ENCODE measurements at regions of chr14 and their contacts with region 1.

Region 1: GRCh38 chr14:50860478-50861086 is 11.3 kb upstream of the ABHD12B start:
- DNase-seq: peak; percentile 94
- ATAC-seq: peak; percentile 47
- H3K4me3 Mint-ChIP-seq: peak overlapping the region; percentile 54; the same call in 1 of the 2 replicates
- H3K27ac Mint-ChIP-seq: peak overlapping the region; percentile 78; the same call in 1 of the 2 replicates
- H3K4me1 Mint-ChIP-seq: peaks cover 52% of the 10 kb centered on the region
- H3K27me3 Mint-ChIP-seq: no peaks in the 10 kb centered on the region; the same call in none of the 2 replicates
- CTCF ChIP-seq: peak; percentile 54

Region 2: GRCh38 chr14:50599700-50600444 is 260.7 kb before region 1 on chr14:
- CTCF ChIA-PET with region 1: interaction called, 21 read pairs
- POLR2A ChIA-PET with region 1: no interaction called
- DNase-seq: no peak
- ATAC-seq: peak; percentile 78
- H3K4me3 Mint-ChIP-seq: no peak overlapping the region
- H3K27ac Mint-ChIP-seq: 0 out of 2 replicates have a peak overlapping the region, but pooled peaks have one; percentile 39
- H3K4me1 Mint-ChIP-seq: peaks cover 19% of the 10 kb centered on the region
- H3K27me3 Mint-ChIP-seq: no peaks in the 10 kb centered on the region
- CTCF ChIP-seq: no peak

Region 3: GRCh38 chr14:50726372-50727107 is 134.0 kb before region 1 on chr14:
- CTCF ChIA-PET with region 1: no interaction called
- POLR2A ChIA-PET with region 1: no interaction called
- DNase-seq: no peak
- ATAC-seq: no peak
- H3K4me3 Mint-ChIP-seq: no peak overlapping the region
- H3K27ac Mint-ChIP-seq: no peak overlapping the region
- H3K4me1 Mint-ChIP-seq: no peaks in the 10 kb centered on the region
- H3K27me3 Mint-ChIP-seq: no peaks in the 10 kb centered on the region
- CTCF ChIP-seq: no peak

Region 4: DNA sequence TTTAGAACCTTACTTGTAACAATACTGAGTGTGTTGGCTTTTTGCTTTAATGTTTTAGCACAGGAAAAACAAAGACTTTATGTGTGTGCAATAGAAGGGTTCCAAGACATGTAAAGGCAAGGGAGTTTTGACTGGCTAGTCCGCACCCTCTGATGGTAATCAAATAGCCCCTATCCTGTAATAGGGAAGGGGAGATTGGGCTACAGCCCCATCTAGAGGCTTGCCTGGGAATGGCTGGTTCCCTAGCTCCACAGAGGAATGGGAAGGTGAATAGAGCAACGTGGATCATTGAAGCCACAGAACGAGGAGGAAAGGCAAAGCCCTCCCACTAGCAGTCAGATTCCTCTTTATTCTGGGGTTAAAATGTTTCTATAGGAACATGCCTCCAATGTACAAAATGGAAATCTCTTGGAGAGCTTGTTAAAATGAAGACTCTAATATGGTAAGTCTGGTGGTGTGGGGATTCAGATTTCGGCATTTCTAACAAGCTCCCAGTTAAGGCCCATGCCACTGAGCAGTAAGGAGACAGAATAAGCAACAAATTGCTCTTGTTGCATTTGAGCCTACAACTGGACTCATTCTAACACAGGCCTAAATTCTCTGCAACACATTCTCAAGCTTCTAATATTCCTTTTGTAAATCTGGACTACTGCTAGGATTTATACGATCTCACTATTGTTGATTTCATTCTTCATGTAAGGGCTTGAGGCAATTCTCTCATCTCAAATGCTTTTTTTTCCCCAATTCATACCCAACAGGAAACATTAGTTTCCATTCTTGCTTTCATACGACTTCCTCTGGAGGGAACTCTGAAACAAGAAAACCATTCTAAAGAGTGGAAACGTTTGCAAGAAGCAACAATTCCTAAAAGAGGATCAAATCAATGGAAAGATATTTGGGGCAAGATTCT is 86.7 kb before region 1 on chr14:
- CTCF ChIA-PET with region 1: interaction called, 56 read pairs
- POLR2A ChIA-PET with region 1: no interaction called
- DNase-seq: peak; percentile 83
- ATAC-seq: peak; percentile 98
- H3K4me3 Mint-ChIP-seq: no peak overlapping the region
- H3K27ac Mint-ChIP-seq: peak overlapping the region; percentile 43
- H3K4me1 Mint-ChIP-seq: peaks cover 12% of the 10 kb centered on the region
- H3K27me3 Mint-ChIP-seq: no peaks in the 10 kb centered on the region
- CTCF ChIP-seq: peak; percentile 72

Region 5: DNA sequence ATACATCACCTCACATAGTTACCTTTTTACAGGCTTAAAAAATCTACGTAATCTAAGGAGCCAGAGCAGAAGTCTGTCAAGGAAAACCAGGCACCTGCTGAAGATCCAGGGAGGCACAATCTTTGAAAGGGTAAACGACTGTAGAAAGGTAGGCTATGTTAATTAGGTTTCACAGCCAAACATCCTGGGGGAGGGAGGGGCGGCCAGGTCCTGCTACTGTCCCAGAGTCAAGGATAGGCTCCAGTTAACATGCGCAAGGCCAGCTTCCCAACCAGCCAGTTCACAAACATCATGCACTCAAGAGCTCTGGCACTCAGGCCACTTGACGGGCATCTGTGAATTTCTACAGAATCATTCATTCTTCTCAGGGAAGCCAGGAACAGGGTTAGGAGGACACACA is 52.5 kb before region 1 on chr14:
- CTCF ChIA-PET with region 1: interaction called, 10 read pairs
- POLR2A ChIA-PET with region 1: no interaction called
- DNase-seq: peak; percentile 40
- ATAC-seq: peak; percentile 87
- H3K4me3 Mint-ChIP-seq: no peak overlapping the region
- H3K27ac Mint-ChIP-seq: no peak overlapping the region
- H3K4me1 Mint-ChIP-seq: peaks cover 33% of the 10 kb centered on the region
- H3K27me3 Mint-ChIP-seq: no peaks in the 10 kb centered on the region
- CTCF ChIP-seq: no peak

Region 6: DNA sequence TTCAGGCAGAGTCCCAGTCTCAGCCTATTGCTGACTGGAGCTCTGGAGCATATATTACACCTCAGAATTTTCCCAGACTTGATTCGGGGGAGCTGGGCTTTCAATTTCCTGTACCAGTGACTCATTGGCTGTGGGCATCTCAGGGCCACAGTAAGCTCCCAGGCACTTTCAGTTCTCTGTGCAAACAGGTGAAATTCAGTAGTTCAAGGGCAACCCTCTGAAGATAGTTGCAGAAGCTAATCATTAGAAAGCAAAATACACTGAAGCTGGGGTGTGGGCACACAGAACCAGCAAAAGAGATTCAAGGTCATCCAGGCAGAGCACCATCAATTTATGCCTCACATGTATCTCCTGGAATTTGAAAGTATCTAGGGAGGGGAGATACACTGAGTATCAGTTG is 21.5 kb before region 1 on chr14:
- CTCF ChIA-PET with region 1: interaction called, 12 read pairs
- POLR2A ChIA-PET with region 1: no interaction called
- DNase-seq: no peak
- ATAC-seq: no peak
- H3K4me3 Mint-ChIP-seq: no peak overlapping the region
- H3K27ac Mint-ChIP-seq: no peak overlapping the region
- H3K4me1 Mint-ChIP-seq: peaks cover 2% of the 10 kb centered on the region; the same call in 1 of the 2 replicates
- H3K27me3 Mint-ChIP-seq: peaks cover 12% of the 10 kb centered on the region
- CTCF ChIP-seq: no peak

Region 7: GRCh38 chr14:50882953-50883826 is 22.6 kb after region 1 on chr14:
- CTCF ChIA-PET with region 1: interaction called, 19 read pairs
- POLR2A ChIA-PET with region 1: no interaction called
- DNase-seq: no peak
- ATAC-seq: peak; percentile 58
- H3K4me3 Mint-ChIP-seq: no peak overlapping the region
- H3K27ac Mint-ChIP-seq: peak overlapping the region; percentile 7; the same call in 1 of the 2 replicates
- H3K4me1 Mint-ChIP-seq: peaks cover 60% of the 10 kb centered on the region
- H3K27me3 Mint-ChIP-seq: no peaks in the 10 kb centered on the region
- CTCF ChIP-seq: no peak

Measured in WTC11 (cell line).